ENCODE measurements at regions of chr2 and their contacts with region 1.

Region 1: DNA sequence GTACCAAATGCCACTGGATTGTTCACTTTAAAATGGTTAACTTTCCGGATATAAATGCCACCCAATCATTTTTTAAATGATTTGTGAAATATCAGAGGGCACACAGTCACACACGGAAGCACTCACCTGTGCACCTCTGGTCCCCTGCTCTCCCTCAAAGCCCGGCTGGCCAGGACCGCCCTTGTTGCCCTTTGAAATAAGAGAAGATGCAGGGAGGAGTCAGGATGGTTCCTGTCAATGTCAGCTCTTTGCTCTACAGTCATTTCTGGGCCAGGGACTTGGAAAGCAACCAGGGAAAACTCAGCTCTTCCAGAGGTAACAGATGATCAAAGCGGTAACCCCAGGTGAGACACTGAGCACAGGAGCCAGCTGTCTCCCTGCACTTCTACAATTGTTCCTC is 60.7 kb downstream of the COL6A3 start:
- DNase-seq: no peak
- H3K4me3 ChIP-seq: no peak overlapping the region
- H3K27ac ChIP-seq: no peak overlapping the region
- H3K4me1 ChIP-seq: no peaks in the 10 kb centered on the region
- CTCF ChIP-seq: no peak

Region 2: GRCh38 chr2:237566401-237567235 is 213.4 kb after region 1 on chr2 and contains the start of gene PRLH:
- CTCF ChIA-PET with region 1: interaction called, 10 read pairs
- POLR2A ChIA-PET with region 1: no interaction called
- intact Hi-C with region 1: no loop called
- DNase-seq: no peak
- H3K4me3 ChIP-seq: no peak within 1 kb of the TSS
- H3K27ac ChIP-seq: no peak within 1 kb of the TSS
- H3K4me1 ChIP-seq: no peaks in the 10 kb centered on the region
- CTCF ChIP-seq: no peak
- total RNA-seq, gene PRLH: not detected in 2 replicates

Region 3: DNA sequence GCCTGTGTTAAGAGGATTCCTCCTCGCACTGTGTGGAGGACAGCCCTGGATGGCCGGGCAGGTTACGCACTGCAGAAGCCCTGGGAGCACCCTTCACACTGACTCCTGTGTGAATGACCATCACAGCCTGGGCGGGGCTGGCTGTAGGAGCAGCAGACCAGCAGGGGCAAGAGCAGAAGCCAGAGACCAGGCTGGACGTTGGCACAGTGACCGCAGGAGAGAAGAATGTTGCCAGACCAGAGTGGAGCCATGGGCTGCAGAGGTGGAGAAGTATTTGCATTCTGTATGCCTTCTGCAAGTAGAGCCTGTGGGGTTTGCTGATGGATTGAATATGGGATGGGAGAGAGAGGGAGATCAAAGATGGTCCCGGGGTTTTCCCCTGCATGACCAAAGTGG is 297.2 kb after region 1 on chr2:
- CTCF ChIA-PET with region 1: no interaction called
- POLR2A ChIA-PET with region 1: no interaction called
- intact Hi-C with region 1: no loop called
- DNase-seq: no peak
- H3K4me3 ChIP-seq: no peak overlapping the region
- H3K27ac ChIP-seq: no peak overlapping the region
- H3K4me1 ChIP-seq: peaks cover 20% of the 10 kb centered on the region
- CTCF ChIP-seq: no peak

Region 4: DNA sequence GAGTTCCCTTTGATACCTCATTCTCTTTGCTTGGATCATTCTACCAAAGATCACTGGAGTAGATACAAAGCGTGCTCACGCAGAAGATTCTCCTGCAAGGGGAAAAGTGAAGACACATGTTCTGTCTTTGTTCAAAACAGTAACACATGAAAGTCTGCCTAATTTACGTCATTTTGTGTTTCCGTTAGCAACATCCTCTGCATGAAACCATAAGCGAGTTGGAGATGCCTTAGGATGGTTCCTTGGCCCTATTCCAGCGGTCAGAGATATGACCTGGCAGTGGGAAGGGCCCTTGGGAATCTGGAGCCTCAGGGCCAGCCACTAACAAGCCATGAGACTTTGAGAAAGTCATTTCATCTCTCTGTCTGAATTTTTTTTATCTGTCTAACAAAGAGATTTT is 1313.8 kb after region 1 on chr2:
- CTCF ChIA-PET with region 1: no interaction called
- POLR2A ChIA-PET with region 1: no interaction called
- intact Hi-C with region 1: no loop called
- DNase-seq: no peak
- H3K4me3 ChIP-seq: no peak overlapping the region
- H3K27ac ChIP-seq: no peak overlapping the region
- H3K4me1 ChIP-seq: peaks cover 3% of the 10 kb centered on the region
- CTCF ChIP-seq: no peak